ENCODE measurements at regions of chr11 and their contacts with region 1.

Region 1: DNA sequence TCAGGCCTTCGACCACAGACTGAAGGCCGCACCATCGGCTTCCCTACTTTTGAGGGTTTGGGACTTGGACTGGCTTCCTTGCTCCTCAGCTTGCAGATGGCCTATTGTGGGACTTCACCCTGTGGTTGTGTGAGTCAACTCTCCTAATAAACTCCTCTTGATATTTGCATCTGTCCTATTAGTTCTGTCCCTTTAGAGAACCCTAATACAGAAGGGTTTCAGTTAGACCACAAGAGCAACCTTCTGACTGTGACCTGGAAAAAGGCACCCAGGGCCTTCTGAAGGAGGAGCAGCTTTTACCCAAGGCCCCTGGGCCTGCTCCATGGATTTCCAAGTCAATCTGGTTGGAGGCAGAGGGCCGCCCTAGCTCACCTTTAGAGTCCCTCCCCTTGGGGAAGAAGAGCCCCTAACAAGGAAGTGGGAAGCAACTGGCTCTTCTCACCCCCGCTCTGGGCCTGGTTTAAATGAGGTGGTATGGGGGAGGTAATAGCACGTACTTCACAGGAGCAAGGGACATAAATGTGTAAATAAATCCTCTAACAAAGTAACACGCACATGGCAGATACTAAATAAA is 11.2 kb upstream of the CHST1 start:
- DNase-seq: no peak
- CTCF ChIP-seq: no peak

Region 2: GRCh38 chr11:45407226-45407625 is 269.4 kb before region 1 on chr11:
- CTCF ChIA-PET with region 1: no interaction called
- POLR2A ChIA-PET with region 1: interaction called, 13 read pairs
- DNase-seq: no peak
- CTCF ChIP-seq: no peak

Region 3: GRCh38 chr11:45692808-45693453 is 16.3 kb after region 1 on chr11:
- CTCF ChIA-PET with region 1: no interaction called
- POLR2A ChIA-PET with region 1: no interaction called
- DNase-seq: no peak
- CTCF ChIP-seq: no peak

Region 4: GRCh38 chr11:45804761-45805304 is 128.2 kb after region 1 on chr11 and contains the start of gene SLC35C1:
- CTCF ChIA-PET with region 1: no interaction called
- POLR2A ChIA-PET with region 1: no interaction called
- DNase-seq: peak; percentile 99
- CTCF ChIP-seq: peak; percentile 11

Measured in GM10248 (cell line).